Activated B cell treated with CpG ODN at 0.5 μM for 24 hours (primary cell): ENCODE measurements at regions of chr11 and their contacts with region 1.

Region 1: GRCh38 chr11:121292495-121293287 is at the start of gene SC5D:
- DNase-seq: peak; percentile 94
- ATAC-seq: peak; percentile 85
- H3K4me3 Mint-ChIP-seq: peak within 1 kb of the TSS; percentile 94
- H3K27ac Mint-ChIP-seq: peak within 1 kb of the TSS; percentile 97
- H3K4me1 Mint-ChIP-seq: peaks cover 50% of the 10 kb centered on the region
- H3K27me3 Mint-ChIP-seq: no peaks in the 10 kb centered on the region
- CTCF ChIP-seq: no peak
- total RNA-seq, gene SC5D: 35.2 and 40.4 TPM in 2 replicates

Region 2: GRCh38 chr11:121194731-121195596 is 97.7 kb before region 1 on chr11:
- CTCF ChIA-PET with region 1: no interaction called
- POLR2A ChIA-PET with region 1: no interaction called
- intact Hi-C with region 1: no loop called
- DNase-seq: no peak
- ATAC-seq: peak; percentile 52
- H3K4me3 Mint-ChIP-seq: no peak overlapping the region
- H3K27ac Mint-ChIP-seq: no peak overlapping the region
- H3K4me1 Mint-ChIP-seq: peaks cover 6% of the 10 kb centered on the region
- H3K27me3 Mint-ChIP-seq: peaks cover 25% of the 10 kb centered on the region
- CTCF ChIP-seq: no peak

Region 3: GRCh38 chr11:121309688-121310087 is 17.0 kb after region 1 on chr11:
- CTCF ChIA-PET with region 1: no interaction called
- POLR2A ChIA-PET with region 1: interaction called, 6 read pairs
- intact Hi-C with region 1: loop called (anchors 2 kb)
- DNase-seq: no peak
- ATAC-seq: peak; percentile 54
- H3K4me3 Mint-ChIP-seq: peak overlapping the region; percentile 33
- H3K27ac Mint-ChIP-seq: peak overlapping the region; percentile 26
- H3K4me1 Mint-ChIP-seq: peaks cover 45% of the 10 kb centered on the region
- H3K27me3 Mint-ChIP-seq: no peaks in the 10 kb centered on the region
- CTCF ChIP-seq: no peak

Region 4: DNA sequence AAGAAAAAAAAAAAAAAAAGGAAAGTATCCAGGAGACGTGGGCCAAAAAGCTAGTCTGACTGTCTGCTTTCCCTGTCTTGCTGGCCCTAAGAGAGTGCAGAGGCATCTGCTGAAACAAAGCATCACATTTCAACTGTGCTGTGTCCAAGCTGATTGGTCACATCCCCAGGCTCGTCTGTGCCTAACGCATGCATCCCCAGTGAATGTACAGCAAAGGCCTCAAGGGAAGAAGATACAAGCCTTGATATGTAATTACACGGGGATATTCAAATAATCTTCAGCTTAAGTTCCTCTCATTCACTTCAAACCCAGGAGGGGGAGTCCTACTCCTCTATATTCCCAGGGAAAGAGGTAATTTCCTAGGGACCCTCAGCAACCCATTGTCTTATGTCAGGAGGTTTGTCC is 154.1 kb after region 1 on chr11:
- CTCF ChIA-PET with region 1: no interaction called
- POLR2A ChIA-PET with region 1: interaction called, 8 read pairs
- intact Hi-C with region 1: loop called (anchors 1 kb)
- DNase-seq: no peak
- ATAC-seq: peak; percentile 49
- H3K4me3 Mint-ChIP-seq: peak overlapping the region; percentile 66
- H3K27ac Mint-ChIP-seq: peak overlapping the region; percentile 80
- H3K4me1 Mint-ChIP-seq: peaks cover 76% of the 10 kb centered on the region
- H3K27me3 Mint-ChIP-seq: no peaks in the 10 kb centered on the region
- CTCF ChIP-seq: no peak

Region 5: GRCh38 chr11:122045181-122045586 is 752.5 kb after region 1 on chr11:
- CTCF ChIA-PET with region 1: no interaction called
- POLR2A ChIA-PET with region 1: no interaction called
- intact Hi-C with region 1: no loop called
- DNase-seq: no peak
- ATAC-seq: no peak
- H3K4me3 Mint-ChIP-seq: no peak overlapping the region
- H3K27ac Mint-ChIP-seq: no peak overlapping the region
- H3K4me1 Mint-ChIP-seq: no peaks in the 10 kb centered on the region
- H3K27me3 Mint-ChIP-seq: no peaks in the 10 kb centered on the region
- CTCF ChIP-seq: no peak

Region 6: DNA sequence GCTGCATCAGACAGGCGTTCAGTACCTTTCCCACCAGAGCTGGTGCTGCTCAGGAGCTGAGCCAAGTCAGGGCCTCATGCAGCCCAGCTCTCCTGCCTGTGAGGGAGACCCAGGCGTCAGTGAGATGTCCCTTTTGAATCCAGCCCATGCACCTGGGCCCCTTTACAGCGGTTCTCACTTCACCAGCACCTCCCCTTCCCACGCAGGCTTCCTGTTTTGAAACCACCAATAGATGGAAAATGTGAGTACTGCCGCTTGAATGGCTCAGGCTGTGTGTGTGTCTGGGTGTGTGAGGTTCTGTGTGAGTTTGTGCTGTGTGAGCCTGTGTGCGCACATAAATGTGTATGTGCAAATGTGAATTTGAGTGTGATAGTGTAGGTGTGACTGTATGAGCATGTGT is 1451.3 kb after region 1 on chr11:
- CTCF ChIA-PET with region 1: no interaction called
- POLR2A ChIA-PET with region 1: no interaction called
- intact Hi-C with region 1: loop called (anchors 2 kb)
- DNase-seq: peak; percentile 51
- ATAC-seq: peak; percentile 51
- H3K4me3 Mint-ChIP-seq: no peak overlapping the region
- H3K27ac Mint-ChIP-seq: no peak overlapping the region
- H3K4me1 Mint-ChIP-seq: peaks cover 12% of the 10 kb centered on the region
- H3K27me3 Mint-ChIP-seq: no peaks in the 10 kb centered on the region
- CTCF ChIP-seq: no peak